Activated T-helper 1 cell treated with anti-CD3 and anti-CD28 coated beads, Interleukin-12 subunit alpha, Interleukin-12 subunit beta, Interleukin-2, Interleukin-4 antibody, amounts not matched to agents 30 ng/mL and 10 ng/mL and 1 ng/mL, durations not matched to agents 14 hours and 24 hours and 36 hours (primary cell): ENCODE measurements at regions of chr11 and their contacts with region 1.

Region 1: GRCh38 chr11:115324581-115325432 is 179.4 kb downstream of the CADM1 start:
- DNase-seq: peak; percentile 20
- H3K4me3 Mint-ChIP-seq: no peak overlapping the region
- H3K27ac Mint-ChIP-seq: no peak overlapping the region
- H3K4me1 Mint-ChIP-seq: no peaks in the 10 kb centered on the region
- H3K27me3 Mint-ChIP-seq: peaks cover 4% of the 10 kb centered on the region

Region 2: DNA sequence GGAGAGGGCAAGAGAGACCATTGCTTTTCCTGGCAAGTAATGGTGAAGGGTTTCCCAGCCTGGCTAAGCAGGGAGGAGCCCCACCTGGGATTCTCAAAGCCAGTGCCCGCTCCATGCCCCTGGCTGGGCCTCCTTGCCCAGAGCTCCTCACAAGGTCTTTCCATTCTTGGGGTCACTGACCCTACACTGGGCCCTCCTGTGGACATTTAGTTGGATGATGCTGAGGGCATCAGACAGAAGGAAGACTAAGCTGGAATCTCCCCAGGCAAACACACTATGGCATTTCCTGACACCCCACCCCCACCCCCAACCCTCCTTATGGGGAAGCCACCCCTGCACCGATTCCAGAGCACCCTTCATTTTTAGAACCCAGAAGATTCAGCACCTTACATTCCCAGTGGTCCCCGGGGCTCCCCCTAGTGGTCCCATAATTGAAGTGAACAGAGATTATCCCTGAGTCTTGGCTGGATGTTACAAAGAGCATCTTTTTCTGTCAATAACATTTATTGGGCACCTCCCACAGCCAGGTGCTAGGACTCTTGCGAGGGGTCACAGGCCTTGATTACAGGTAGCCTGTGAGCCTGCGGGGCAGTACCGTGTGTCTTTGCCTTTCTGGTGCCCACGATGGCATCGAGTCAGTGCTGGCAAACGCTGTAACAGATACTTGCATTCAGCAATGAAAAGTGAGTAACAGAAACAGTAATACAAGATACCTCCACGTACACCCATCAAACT is 899.5 kb after region 1 on chr11:
- intact Hi-C with region 1: loop called (anchors 1 kb)
- DNase-seq: no peak
- H3K4me3 Mint-ChIP-seq: no peak overlapping the region
- H3K27ac Mint-ChIP-seq: no peak overlapping the region
- H3K4me1 Mint-ChIP-seq: no peaks in the 10 kb centered on the region
- H3K27me3 Mint-ChIP-seq: no peaks in the 10 kb centered on the region